Naive thymus-derived CD4-positive, alpha-beta T cell (primary cell): ENCODE measurements at regions of chr6 and their contacts with region 1.

Region 1: DNA sequence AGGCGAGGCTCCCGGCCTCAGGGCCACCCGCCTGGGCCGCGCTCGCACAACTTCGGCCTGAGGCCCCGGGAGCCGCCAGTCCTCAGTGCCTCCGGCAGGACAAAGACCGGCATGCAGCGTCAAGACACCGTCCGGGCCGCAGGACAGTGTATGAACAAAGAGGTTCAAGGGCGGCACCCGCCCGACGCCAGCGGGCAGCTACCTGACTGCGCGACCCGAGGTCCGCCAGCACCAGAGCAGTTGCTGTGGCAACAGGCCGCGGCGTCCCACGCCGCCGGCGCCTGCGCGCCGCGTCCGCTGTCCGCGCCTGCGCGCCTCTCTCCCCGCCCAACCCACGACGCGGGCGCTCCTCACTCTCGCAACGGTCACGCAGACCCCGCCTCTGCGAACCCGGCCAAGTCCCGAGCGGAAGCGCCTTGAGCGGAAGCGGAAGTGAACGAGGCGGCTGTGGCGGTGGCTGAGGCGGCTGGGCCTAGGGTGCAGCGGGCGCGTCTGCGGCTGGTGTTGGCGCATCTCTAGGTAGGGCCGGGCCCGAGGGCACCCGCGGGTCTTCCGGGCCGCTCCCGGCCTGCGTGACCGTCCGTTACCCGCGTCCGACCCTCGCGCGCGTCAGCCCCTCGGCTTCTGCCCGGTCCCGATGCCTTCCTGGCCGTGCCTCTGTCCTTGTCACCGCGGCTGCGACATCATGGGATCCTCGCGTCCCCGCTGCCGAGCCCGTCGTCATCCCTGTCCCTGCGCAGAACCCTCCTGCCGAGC is at the start of gene FAM120B:
- DNase-seq: peak; percentile 90 to 95 (median 94)
- ATAC-seq: peak; percentile 97
- H3K4me3 ChIP-seq: peak within 1 kb of the TSS; percentile 84
- H3K4me3 Mint-ChIP-seq: peak within 1 kb of the TSS; percentile 88 to 98 (median 96)
- H3K27ac ChIP-seq: peak within 1 kb of the TSS; percentile 87
- H3K27ac Mint-ChIP-seq: peak within 1 kb of the TSS; percentile 92 to 98 (median 95)
- H3K4me1 ChIP-seq: peaks cover 28 to 43% of the 10 kb centered on the region in 2 donors
- H3K4me1 Mint-ChIP-seq: peaks cover 35 to 49% (median 43%) of the 10 kb centered on the region in 7 donors
- H3K27me3 ChIP-seq: no peaks in the 10 kb centered on the region
- H3K27me3 Mint-ChIP-seq: peaks cover 5 to 37% (median 11%) of the 10 kb centered on the region in 5 donors
- total RNA-seq, gene FAM120B: 27.2 to 53.4 (median 35.5) TPM

Region 2: GRCh38 chr6:168895102-168895812 is 1411.2 kb before region 1 on chr6:
- CTCF ChIA-PET with region 1: no interaction called
- POLR2A ChIA-PET with region 1: no interaction called
- intact Hi-C with region 1: loop called in 1 of 2 experiments (anchors 2 kb)
- DNase-seq: peak; percentile 57 to 76 (median 72)
- ATAC-seq: peak; percentile 94
- H3K4me3 ChIP-seq: peak overlapping the region; percentile 49
- H3K4me3 Mint-ChIP-seq: peak overlapping the region; percentile 12 to 79 (median 70)
- H3K27ac ChIP-seq: no peak overlapping the region
- H3K27ac Mint-ChIP-seq: peak overlapping the region; percentile 24 to 83 (median 71)
- H3K4me1 ChIP-seq: peaks cover 6% of the 10 kb centered on the region in 2 donors
- H3K4me1 Mint-ChIP-seq: peaks cover 7 to 24% (median 15%) of the 10 kb centered on the region in 7 donors
- H3K27me3 ChIP-seq: no peaks in the 10 kb centered on the region
- H3K27me3 Mint-ChIP-seq: peaks cover 0 to 3% (median 0%) of the 10 kb centered on the region in 5 donors

Region 3: GRCh38 chr6:169701954-169702839 is 604.3 kb before region 1 on chr6 and contains the starts of genes C6orf120 and WDR27:
- CTCF ChIA-PET with region 1: no interaction called
- POLR2A ChIA-PET with region 1: interaction called, 4 read pairs
- intact Hi-C with region 1: loop called (anchors 1 kb)
- DNase-seq: peak; percentile 91 to 98 (median 94)
- ATAC-seq: peak; percentile 93
- H3K4me3 ChIP-seq: peak within 1 kb of the TSS; percentile 95
- H3K4me3 Mint-ChIP-seq: peak within 1 kb of the TSS; percentile 89 to 94 (median 92)
- H3K27ac ChIP-seq: peak within 1 kb of the TSS; percentile 98
- H3K27ac Mint-ChIP-seq: peak within 1 kb of the TSS; percentile 88 to 96 (median 93)
- H3K4me1 ChIP-seq: peaks cover 22 to 36% of the 10 kb centered on the region in 2 donors
- H3K4me1 Mint-ChIP-seq: peaks cover 28 to 66% (median 55%) of the 10 kb centered on the region in 7 donors
- H3K27me3 ChIP-seq: no peaks in the 10 kb centered on the region
- H3K27me3 Mint-ChIP-seq: no peaks in the 10 kb centered on the region
- total RNA-seq, gene C6orf120: 16.0 to 38.1 (median 19.3) TPM
- total RNA-seq, gene WDR27: 22.7 to 89.0 (median 41.4) TPM

Region 4: DNA sequence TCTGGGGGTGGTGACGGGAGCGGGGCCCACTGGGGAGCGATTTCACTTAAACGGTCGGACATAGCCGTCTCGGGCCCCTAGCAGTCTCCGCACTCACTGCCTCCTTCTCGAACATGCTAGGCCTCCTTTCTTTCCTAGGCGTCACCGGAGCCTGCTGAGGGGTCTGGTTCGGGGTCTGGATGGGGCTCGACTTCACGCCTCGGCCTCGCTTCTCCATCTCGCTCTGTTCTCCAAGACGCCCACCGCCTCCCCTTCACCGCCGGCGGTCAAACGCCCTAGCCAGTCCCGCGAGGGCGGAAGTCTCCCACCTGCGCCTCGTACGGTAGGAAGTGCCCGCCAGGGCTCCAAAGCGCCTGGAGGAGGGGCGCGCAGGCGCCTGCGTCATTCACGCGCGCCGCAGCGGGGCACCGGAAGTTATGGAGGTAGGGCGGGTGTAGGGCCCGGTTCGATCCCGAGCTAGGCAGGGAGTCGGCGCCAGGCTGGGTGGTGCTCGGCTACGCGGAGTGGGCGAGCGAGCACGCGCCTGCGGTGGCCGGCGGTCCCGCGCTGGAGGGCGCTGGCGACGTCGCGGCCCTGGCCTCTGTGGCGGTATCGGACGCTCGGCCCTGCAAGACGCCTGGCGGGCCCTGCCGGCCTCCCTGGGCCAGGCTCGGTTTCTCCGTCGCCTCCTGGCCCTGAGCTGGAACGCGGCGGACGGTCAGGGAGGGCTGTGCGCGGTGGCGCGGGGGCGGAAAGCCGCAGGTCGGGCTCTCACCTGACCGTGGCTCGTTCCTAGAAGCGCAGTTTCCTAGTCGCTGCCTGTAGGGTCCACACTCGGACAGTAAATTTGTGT is 555.0 kb before region 1 on chr6 and contains the starts of genes DYNLT2 and ERMARD:
- CTCF ChIA-PET with region 1: no interaction called
- POLR2A ChIA-PET with region 1: interaction called, 3 read pairs
- intact Hi-C with region 1: loop called (anchors 1 to 2 kb)
- DNase-seq: peak; percentile 89 to 97 (median 94)
- ATAC-seq: peak; percentile 98
- H3K4me3 ChIP-seq: peak within 1 kb of the TSS; percentile 84
- H3K4me3 Mint-ChIP-seq: peak within 1 kb of the TSS; percentile 92 to 100 (median 98)
- H3K27ac ChIP-seq: peak within 1 kb of the TSS; percentile 92
- H3K27ac Mint-ChIP-seq: peak within 1 kb of the TSS; percentile 96 to 100 (median 100)
- H3K4me1 ChIP-seq: peaks cover 17% of the 10 kb centered on the region in 2 donors
- H3K4me1 Mint-ChIP-seq: peaks cover 21 to 43% (median 37%) of the 10 kb centered on the region in 7 donors
- H3K27me3 ChIP-seq: no peaks in the 10 kb centered on the region
- H3K27me3 Mint-ChIP-seq: peaks cover 0 to 4% (median 0%) of the 10 kb centered on the region in 5 donors
- total RNA-seq, gene DYNLT2: 2.5 to 4.7 (median 4.1) TPM
- total RNA-seq, gene ERMARD: 30.3 to 43.7 (median 35.7) TPM

Region 5: GRCh38 chr6:170165072-170165463 is 141.4 kb before region 1 on chr6:
- CTCF ChIA-PET with region 1: no interaction called
- POLR2A ChIA-PET with region 1: no interaction called
- intact Hi-C with region 1: no loop called
- DNase-seq: no peak
- ATAC-seq: peak; percentile 10
- H3K4me3 ChIP-seq: no peak overlapping the region
- H3K4me3 Mint-ChIP-seq: no peak overlapping the region
- H3K27ac ChIP-seq: no peak overlapping the region
- H3K27ac Mint-ChIP-seq: no peak overlapping the region
- H3K4me1 ChIP-seq: no peaks in the 10 kb centered on the region
- H3K4me1 Mint-ChIP-seq: peaks cover 0 to 8% (median 4%) of the 10 kb centered on the region in 7 donors
- H3K27me3 ChIP-seq: no peaks in the 10 kb centered on the region
- H3K27me3 Mint-ChIP-seq: peaks cover 0 to 7% (median 4%) of the 10 kb centered on the region in 5 donors

Region 6: DNA sequence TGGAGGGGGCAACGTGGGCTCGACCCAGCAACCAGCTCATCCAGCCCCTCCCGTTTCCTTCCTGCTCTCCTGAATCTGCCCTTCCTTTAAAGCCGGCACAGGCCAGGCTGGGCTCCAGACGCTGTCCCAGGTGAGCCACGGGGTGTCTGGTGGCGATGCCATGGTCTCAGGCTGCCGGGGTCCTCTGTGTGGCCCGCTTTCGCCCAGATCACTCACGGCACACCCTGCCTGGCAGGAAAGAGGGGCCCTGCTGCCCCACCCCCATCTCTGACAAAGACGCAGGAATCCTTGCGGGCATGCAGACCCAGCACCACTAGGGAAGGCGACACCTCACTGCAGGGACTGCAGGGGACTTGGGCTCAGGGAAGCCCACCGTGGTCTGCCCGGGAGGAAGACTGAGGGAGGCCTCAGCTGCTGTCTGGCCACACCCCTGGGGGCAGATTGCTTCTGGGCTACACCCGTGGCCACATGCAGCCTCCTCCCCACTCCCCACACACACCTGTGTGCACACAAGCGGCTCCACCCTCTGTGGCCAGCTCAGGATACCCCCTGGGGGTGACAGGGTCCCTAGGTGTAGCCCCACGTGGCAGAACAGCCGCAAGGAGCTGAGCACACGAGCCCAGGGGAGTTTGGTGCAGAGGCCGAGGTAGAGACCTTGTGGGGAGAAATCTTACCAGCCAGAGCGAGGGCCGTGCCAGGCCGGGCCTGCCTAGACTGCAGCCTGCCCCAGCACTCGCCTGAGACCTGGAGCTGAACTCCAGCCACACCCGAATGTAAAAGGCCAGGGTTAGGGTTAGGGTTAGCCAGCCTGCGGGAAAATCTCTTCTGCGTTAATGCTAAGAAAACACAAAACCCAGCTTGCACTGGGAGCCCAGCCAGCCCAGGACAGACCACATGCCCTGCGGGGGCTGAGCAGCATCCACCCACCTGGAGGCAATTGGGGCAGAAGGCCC is 120.2 kb before region 1 on chr6:
- CTCF ChIA-PET with region 1: no interaction called
- POLR2A ChIA-PET with region 1: no interaction called
- intact Hi-C with region 1: no loop called
- DNase-seq: no peak
- ATAC-seq: no peak
- H3K4me3 ChIP-seq: no peak overlapping the region
- H3K4me3 Mint-ChIP-seq: no peak overlapping the region
- H3K27ac ChIP-seq: no peak overlapping the region
- H3K27ac Mint-ChIP-seq: no peak overlapping the region
- H3K4me1 ChIP-seq: no peaks in the 10 kb centered on the region
- H3K4me1 Mint-ChIP-seq: peaks cover 0 to 19% (median 5%) of the 10 kb centered on the region in 7 donors
- H3K27me3 ChIP-seq: no peaks in the 10 kb centered on the region
- H3K27me3 Mint-ChIP-seq: peaks cover 0 to 3% (median 0%) of the 10 kb centered on the region in 5 donors

Region 7: GRCh38 chr6:170271771-170272314 is 34.7 kb before region 1 on chr6:
- CTCF ChIA-PET with region 1: no interaction called
- POLR2A ChIA-PET with region 1: interaction called, 23 read pairs
- intact Hi-C with region 1: loop called (anchors 1 kb)
- DNase-seq: peak; percentile 52 to 86 (median 81)
- ATAC-seq: peak; percentile 90
- H3K4me3 ChIP-seq: peak overlapping the region; percentile 71
- H3K4me3 Mint-ChIP-seq: peak overlapping the region; percentile 79 to 93 (median 88)
- H3K27ac ChIP-seq: peak overlapping the region; percentile 75
- H3K27ac Mint-ChIP-seq: peak overlapping the region; percentile 77 to 98 (median 94)
- H3K4me1 ChIP-seq: peaks cover 14 to 21% of the 10 kb centered on the region in 2 donors
- H3K4me1 Mint-ChIP-seq: peaks cover 15 to 42% (median 28%) of the 10 kb centered on the region in 7 donors
- H3K27me3 ChIP-seq: no peaks in the 10 kb centered on the region
- H3K27me3 Mint-ChIP-seq: peaks cover 0 to 64% (median 0%) of the 10 kb centered on the region in 5 donors

Region 8: GRCh38 chr6:170554013-170554795 is 247.7 kb after region 1 on chr6 and contains the start of gene TBP:
- CTCF ChIA-PET with region 1: no interaction called
- POLR2A ChIA-PET with region 1: interaction called, 4 read pairs
- intact Hi-C with region 1: loop called (anchors 1 kb)
- DNase-seq: peak; percentile 90 to 99 (median 97)
- ATAC-seq: peak; percentile 95
- H3K4me3 ChIP-seq: peak within 1 kb of the TSS; percentile 91
- H3K4me3 Mint-ChIP-seq: no peak within 1 kb of the TSS
- H3K27ac ChIP-seq: peak within 1 kb of the TSS; percentile 93
- H3K27ac Mint-ChIP-seq: no peak within 1 kb of the TSS
- H3K4me1 ChIP-seq: peaks cover 38% of the 10 kb centered on the region in 2 donors
- H3K4me1 Mint-ChIP-seq: peaks cover 16 to 46% (median 30%) of the 10 kb centered on the region in 7 donors
- H3K27me3 ChIP-seq: no peaks in the 10 kb centered on the region
- H3K27me3 Mint-ChIP-seq: no peaks in the 10 kb centered on the region
- total RNA-seq, gene TBP: 13.8 to 28.3 (median 23.9) TPM